PC-9 (cell line): ENCODE measurements at regions of chr17 and their contacts with region 1.

Region 1: GRCh38 chr17:58447039-58447975 is 30.0 kb upstream of the RNF43 start:
- DNase-seq: peak; percentile 75 to 79
- H3K4me3 ChIP-seq: no peak overlapping the region
- H3K27ac ChIP-seq: no peak overlapping the region
- H3K4me1 ChIP-seq: no peaks in the 10 kb centered on the region
- H3K27me3 ChIP-seq: peaks cover 23% of the 10 kb centered on the region
- CTCF ChIP-seq: peak; percentile 93

Region 2: GRCh38 chr17:57130761-57131461 is 1316.4 kb before region 1 on chr17:
- CTCF ChIA-PET with region 1: no interaction called
- POLR2A ChIA-PET with region 1: no interaction called
- intact Hi-C with region 1: loop called (anchors 10 kb)
- DNase-seq: peak; percentile 66 to 67
- H3K4me3 ChIP-seq: no peak overlapping the region; the same call in 1 of the 2 replicates
- H3K27ac ChIP-seq: no peak overlapping the region
- H3K4me1 ChIP-seq: peaks cover 7% of the 10 kb centered on the region
- H3K27me3 ChIP-seq: no peaks in the 10 kb centered on the region
- CTCF ChIP-seq: peak; percentile 96

Region 3: DNA sequence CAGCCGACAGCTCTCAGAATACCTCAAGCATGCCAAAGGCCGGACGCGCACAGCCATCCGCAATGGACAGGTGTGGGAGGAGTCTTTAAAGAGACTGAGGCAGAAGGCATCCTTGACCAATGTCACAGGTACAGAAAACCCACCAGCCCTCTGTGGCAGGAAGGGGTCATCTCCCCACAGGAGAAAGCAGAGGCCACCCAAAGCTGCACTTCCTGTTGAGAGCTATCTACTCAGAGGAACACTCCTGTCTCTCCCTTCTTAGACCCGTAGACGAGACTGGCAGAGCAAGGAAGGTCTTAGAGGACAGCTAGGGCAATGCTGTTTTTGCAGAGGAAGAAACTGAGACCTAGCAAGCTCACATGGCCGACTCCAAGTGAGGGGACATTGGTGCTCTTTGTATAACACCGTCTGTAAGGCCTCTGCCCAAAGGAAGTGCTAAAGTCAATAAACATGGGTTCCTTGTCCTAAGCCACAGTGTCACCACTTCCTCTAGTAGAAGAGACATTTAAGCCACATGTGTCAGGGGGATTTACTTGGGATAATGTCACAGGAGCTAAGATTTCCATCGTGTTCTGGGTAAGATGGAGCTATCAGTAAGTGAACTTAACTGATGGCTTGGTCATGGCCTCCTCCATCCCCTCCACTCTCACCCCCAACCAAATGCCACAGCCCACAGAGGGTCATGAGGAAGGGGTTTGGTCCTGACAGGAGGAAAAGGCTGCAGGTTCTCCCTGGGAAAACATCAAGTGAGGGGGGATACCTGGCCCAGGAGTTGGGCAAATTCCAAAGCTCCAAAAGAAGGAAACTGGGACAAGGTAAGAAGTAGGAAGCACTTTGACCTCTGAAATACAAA is 199.6 kb before region 1 on chr17:
- CTCF ChIA-PET with region 1: no interaction called
- POLR2A ChIA-PET with region 1: no interaction called
- intact Hi-C with region 1: loop called (anchors 1 kb)
- DNase-seq: no peak
- H3K4me3 ChIP-seq: no peak overlapping the region
- H3K27ac ChIP-seq: no peak overlapping the region
- H3K4me1 ChIP-seq: no peaks in the 10 kb centered on the region
- H3K27me3 ChIP-seq: peaks cover 96% of the 10 kb centered on the region
- CTCF ChIP-seq: no peak

Region 4: GRCh38 chr17:58291246-58291645 is 156.1 kb before region 1 on chr17:
- CTCF ChIA-PET with region 1: interaction called, 11 read pairs
- POLR2A ChIA-PET with region 1: no interaction called
- intact Hi-C with region 1: no loop called
- DNase-seq: no peak
- H3K4me3 ChIP-seq: no peak overlapping the region
- H3K27ac ChIP-seq: no peak overlapping the region
- H3K4me1 ChIP-seq: peaks cover 9% of the 10 kb centered on the region
- H3K27me3 ChIP-seq: peaks cover 79% of the 10 kb centered on the region
- CTCF ChIP-seq: no peak

Region 5: DNA sequence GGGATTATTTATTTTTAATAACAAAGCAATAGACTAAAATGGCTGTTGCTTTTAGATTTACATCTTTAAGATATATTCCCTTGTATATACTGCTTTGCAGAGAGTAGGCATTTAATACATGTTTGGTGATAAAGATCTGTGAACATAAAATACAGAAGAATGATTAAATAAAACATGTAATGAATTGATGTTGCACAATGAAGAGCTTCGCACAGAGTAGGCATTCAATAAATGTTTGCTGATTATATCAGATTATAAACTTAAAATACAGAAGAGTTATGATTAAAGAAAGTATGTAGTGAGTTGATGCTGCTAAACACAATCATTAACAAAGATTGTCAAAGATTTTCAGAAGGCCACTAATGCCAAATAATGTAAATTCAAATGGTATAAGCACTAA is 16.5 kb after region 1 on chr17:
- CTCF ChIA-PET with region 1: interaction called, 10 read pairs
- POLR2A ChIA-PET with region 1: no interaction called
- intact Hi-C with region 1: no loop called
- DNase-seq: no peak
- H3K4me3 ChIP-seq: no peak overlapping the region
- H3K27ac ChIP-seq: no peak overlapping the region
- H3K4me1 ChIP-seq: no peaks in the 10 kb centered on the region
- H3K27me3 ChIP-seq: peaks cover 20% of the 10 kb centered on the region
- CTCF ChIP-seq: no peak

Region 6: DNA sequence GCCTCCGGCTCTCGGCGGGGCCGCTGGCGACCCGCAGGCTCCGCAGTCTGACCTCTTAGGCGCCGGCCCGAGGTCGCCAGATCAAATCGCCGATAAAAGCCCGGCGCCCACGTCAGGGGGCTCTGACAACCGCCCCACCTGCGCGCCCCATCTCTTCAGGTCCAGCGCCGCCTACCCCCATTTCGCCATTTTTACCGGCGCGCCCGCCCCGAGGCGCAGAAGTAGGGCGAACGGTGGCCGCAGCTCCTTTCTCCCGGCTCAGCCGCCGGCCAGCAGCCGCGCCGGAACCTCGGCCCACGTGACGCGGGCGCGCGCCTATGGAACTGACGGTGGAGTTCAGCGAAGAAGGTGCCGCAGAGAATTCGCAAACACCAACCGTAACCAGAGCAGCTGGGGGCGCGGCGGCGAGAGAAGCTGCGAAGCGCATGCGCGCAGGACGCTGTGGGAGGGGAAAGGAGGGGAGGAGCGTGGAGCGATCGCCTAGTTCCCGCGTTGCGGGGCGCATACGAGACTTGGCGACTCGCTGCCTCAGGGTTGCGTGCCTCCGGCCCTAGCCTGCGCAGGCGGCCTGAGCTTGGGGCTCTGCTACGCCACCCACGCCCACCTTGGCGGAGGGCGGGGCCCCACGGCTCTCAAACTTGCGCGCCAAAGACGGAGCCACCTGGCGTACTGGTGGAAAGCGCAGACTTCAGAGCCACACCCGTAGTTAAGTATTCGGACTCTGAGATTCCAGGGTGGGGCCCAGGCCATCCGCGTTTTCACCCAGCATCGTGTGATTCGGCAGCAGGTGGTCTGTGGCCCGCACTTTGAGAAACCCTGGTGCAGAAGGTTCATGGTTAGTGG is 659.4 kb after region 1 on chr17 and contains the start of gene TRIM37:
- CTCF ChIA-PET with region 1: no interaction called
- POLR2A ChIA-PET with region 1: no interaction called
- intact Hi-C with region 1: no loop called
- DNase-seq: peak; percentile 98 to 99
- H3K4me3 ChIP-seq: peak within 1 kb of the TSS; percentile 73
- H3K27ac ChIP-seq: peak within 1 kb of the TSS; percentile 73
- H3K4me1 ChIP-seq: peaks cover 26% of the 10 kb centered on the region
- H3K27me3 ChIP-seq: no peaks in the 10 kb centered on the region
- CTCF ChIP-seq: no peak
- total RNA-seq, gene TRIM37: 21.6 and 24.6 TPM in 2 replicates